K562 (cell line): ENCODE measurements at regions of chr1 and their contacts with region 1.

Region 1: DNA sequence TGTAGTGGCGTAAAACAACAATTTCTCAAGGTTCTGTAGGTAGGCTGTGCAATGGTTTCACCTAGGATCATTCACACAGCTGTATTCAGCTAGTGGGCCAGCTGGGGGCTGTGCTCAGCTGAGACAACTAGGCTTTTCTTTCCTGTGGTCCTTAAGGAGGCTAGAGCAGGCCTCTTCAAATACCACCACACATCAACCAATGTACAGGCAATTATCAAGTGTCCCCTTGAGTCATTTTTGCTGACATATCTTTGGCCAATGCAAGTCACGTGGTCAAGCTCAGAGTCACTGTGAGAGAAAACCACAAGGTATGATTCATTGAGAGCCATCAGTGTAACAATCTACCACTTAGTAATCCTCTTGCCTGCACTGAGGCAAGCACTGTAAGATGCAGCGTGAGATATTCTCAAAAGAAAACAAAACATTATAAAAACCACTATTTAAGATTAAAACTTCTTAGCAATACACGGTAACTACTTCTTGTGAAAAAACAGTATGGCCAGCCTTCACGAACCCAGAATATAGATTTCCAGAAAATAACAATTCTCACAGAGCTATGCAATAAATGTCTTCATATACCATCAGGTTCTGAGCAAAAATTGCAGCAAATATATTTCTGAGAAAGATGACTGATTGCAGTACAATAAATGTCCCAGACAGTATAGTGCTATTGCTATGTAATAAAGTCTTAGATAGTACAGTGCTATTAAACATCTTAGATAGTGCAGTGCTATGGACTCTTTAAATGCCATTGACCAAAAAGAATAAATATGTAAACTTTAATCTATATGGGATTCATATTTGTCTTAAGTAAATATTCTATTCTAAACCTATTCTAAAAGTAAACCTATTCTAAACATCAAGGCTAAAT is 55.3 kb downstream of the NME7 start:
- DNase-seq: peak; percentile 57 to 93 (median 66)
- ATAC-seq: peak; percentile 83
- H3K4me3 ChIP-seq: no peak overlapping the region
- H3K27ac ChIP-seq: peak overlapping the region; percentile 81
- H3K4me1 ChIP-seq: peaks cover 3 to 30% of the 10 kb centered on the region in 2 experiments
- H3K27me3 ChIP-seq: no peaks in the 10 kb centered on the region
- CTCF ChIP-seq: no peak
- EP300 ChIP-seq: peak; percentile 66; the same call in 1 of the 2 replicates
- POLR2A ChIP-seq: no peak
- RAD21 ChIP-seq: no peak; a peak in 1 of 4 replicates

Region 2: DNA sequence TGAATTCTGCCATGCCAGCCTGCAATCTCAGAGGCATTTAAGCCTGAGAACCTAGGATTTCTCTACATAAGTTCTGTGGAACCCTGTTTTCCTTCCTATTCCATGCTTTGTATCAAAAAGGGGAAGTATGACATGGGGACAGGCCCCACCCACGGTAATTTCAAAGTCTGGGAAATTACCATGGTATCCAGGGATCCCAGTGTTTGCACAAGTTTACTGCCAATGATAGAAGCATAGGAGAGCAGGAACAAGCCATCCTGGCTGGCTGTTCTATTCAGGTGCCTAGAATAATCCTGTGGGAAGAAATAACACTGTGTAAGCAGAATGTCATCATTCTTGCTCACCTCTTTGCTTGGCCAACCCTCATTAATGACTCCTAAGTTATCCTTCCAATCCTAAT is 259.6 kb before region 1 on chr1:
- CTCF ChIA-PET with region 1: no interaction called
- POLR2A ChIA-PET with region 1: no interaction called
- in situ Hi-C with region 1: no loop called
- intact Hi-C with region 1: no loop called
- DNase-seq: no peak
- ATAC-seq: no peak
- H3K4me3 ChIP-seq: no peak overlapping the region
- H3K27ac ChIP-seq: no peak overlapping the region
- H3K4me1 ChIP-seq: no peaks in the 10 kb centered on the region; a peak in 1 of 5 replicates
- H3K27me3 ChIP-seq: peaks cover 0 to 22% of the 10 kb centered on the region in 2 experiments; a peak in 3 of 5 replicates
- CTCF ChIP-seq: no peak
- EP300 ChIP-seq: no peak
- POLR2A ChIP-seq: no peak
- RAD21 ChIP-seq: no peak

Region 3: DNA sequence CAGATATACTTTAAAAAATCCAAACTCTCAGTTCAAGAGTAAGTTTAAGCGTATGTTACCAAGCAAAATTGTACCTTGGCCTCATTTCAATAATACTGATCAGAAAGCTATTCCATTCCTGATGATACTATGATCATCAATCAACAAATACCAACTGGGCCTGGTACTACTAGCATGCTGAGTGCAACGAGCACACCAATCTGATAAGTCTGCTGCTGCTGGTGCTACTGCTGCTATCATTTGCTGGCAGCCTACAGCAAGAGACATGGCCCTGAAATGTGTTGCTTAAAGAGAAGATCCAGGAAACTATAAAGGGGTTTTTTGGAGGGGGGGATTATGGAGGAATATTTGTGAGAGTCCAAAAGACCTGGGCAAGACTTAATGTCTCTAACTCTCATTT is 15.6 kb after region 1 on chr1:
- CTCF ChIA-PET with region 1: no interaction called
- POLR2A ChIA-PET with region 1: interaction called, 7 read pairs
- in situ Hi-C with region 1: no loop called
- intact Hi-C with region 1: loop called (anchors 2 kb)
- DNase-seq: peak in 2 of 4 experiments; percentile 49 to 70
- ATAC-seq: peak; percentile 84
- H3K4me3 ChIP-seq: no peak overlapping the region
- H3K27ac ChIP-seq: peak overlapping the region; percentile 55
- H3K4me1 ChIP-seq: peaks cover 0 to 29% of the 10 kb centered on the region in 2 experiments; a peak in 3 of 5 replicates
- H3K27me3 ChIP-seq: no peaks in the 10 kb centered on the region
- CTCF ChIP-seq: no peak
- EP300 ChIP-seq: peak; percentile 15; the same call in 1 of the 2 replicates
- POLR2A ChIP-seq: no peak
- RAD21 ChIP-seq: no peak

Region 4: GRCh38 chr1:169339773-169340172 is 27.5 kb after region 1 on chr1:
- CTCF ChIA-PET with region 1: no interaction called
- POLR2A ChIA-PET with region 1: interaction called, 8 read pairs
- in situ Hi-C with region 1: no loop called
- intact Hi-C with region 1: loop called (anchors 2 kb)
- DNase-seq: no peak
- ATAC-seq: peak; percentile 39
- H3K4me3 ChIP-seq: no peak overlapping the region
- H3K27ac ChIP-seq: no peak overlapping the region; the same call in 2 of the 3 replicates
- H3K4me1 ChIP-seq: peaks cover 3 to 9% of the 10 kb centered on the region in 2 experiments; a peak in 3 of 5 replicates
- H3K27me3 ChIP-seq: no peaks in the 10 kb centered on the region
- CTCF ChIP-seq: no peak
- EP300 ChIP-seq: no peak
- POLR2A ChIP-seq: no peak
- RAD21 ChIP-seq: no peak